Breast epithelium (tissue), 4 donors: ENCODE measurements at regions of chr7 and their contacts with region 1.

Region 1: DNA sequence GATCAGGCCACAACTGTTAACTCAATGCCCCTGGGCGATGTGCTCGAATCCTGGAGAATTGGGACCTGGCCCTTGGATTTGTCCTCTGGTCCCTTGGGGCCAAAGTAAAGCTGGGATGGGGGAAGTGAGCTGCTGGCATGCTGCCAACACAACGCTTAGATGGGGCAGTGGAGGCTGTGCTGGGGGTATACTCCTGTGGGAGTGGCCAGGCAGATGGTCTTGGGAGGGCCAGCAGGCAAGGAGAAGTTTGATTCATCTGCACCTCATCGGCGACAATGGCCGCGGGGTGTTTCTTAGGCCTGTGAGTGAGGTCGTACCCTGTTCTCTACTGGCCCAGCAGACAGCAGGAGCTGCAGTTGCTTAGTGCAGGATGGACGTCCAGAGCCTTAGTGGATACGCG is 139.0 kb upstream of the MTPN start:
- DNase-seq: no peak
- H3K4me3 ChIP-seq: no peak overlapping the region
- H3K27ac ChIP-seq: no peak overlapping the region
- H3K4me1 ChIP-seq: no peaks in the 10 kb centered on the region
- H3K27me3 ChIP-seq: no peaks in the 10 kb centered on the region
- CTCF ChIP-seq: no peak
- POLR2A ChIP-seq: no peak

Region 2: DNA sequence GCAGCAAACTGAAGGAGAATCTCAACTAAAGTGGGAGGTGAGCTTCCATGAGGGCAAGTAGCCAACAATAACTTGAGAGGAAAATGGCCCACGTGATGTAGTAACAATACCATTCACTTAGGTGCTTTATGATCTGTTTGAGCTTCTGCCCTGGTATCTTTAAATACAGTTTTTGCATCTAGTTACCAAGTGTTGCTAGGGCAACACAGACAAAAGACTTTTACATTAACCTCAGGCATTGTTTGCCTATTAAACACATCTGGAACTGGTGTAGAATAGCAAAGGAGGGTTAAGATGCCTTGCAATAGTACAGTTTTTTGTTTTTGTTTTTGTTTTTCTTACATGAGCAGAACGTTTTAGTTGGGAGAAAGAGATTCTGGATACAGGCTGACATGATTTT is 41.4 kb before region 1 on chr7:
- intact Hi-C with region 1: loop called (anchors 1 kb)
- DNase-seq: no peak
- H3K4me3 ChIP-seq: no peak overlapping the region
- H3K27ac ChIP-seq: no peak overlapping the region
- H3K4me1 ChIP-seq: no peaks in the 10 kb centered on the region
- H3K27me3 ChIP-seq: no peaks in the 10 kb centered on the region
- CTCF ChIP-seq: no peak
- POLR2A ChIP-seq: no peak